ENCODE measurements at regions of chr22 and their contacts with region 1.

Region 1: GRCh38 chr22:20429254-20430100 is 8.1 kb downstream of the SCARF2 start:
- DNase-seq: peak in 5 of 10 donors; percentile 49 to 74 (median 56)
- H3K4me3 ChIP-seq: peak overlapping the region in 57 of 59 donors; percentile 8 to 64 (median 45)
- H3K27ac ChIP-seq: peak overlapping the region in 14 of 59 donors; percentile 9 to 59 (median 32)
- H3K27me3 ChIP-seq: peaks cover 0 to 10% (median 0%) of the 10 kb centered on the region in 45 donors
- CTCF ChIP-seq: no peak

Region 2: GRCh38 chr22:20298803-20299735 is 130.4 kb before region 1 on chr22:
- intact Hi-C with region 1: no loop called
- DNase-seq: peak in 8 of 10 donors; percentile 44 to 80 (median 68)
- H3K4me3 ChIP-seq: peak overlapping the region; percentile 29 to 75 (median 58)
- H3K27ac ChIP-seq: peak overlapping the region in 4 of 59 donors; percentile 21 to 65 (median 30)
- H3K27me3 ChIP-seq: peaks cover 0 to 22% (median 0%) of the 10 kb centered on the region in 45 donors
- CTCF ChIP-seq: no peak

Region 3: GRCh38 chr22:20490183-20490940 is 60.9 kb after region 1 on chr22:
- intact Hi-C with region 1: no loop called
- DNase-seq: no peak
- H3K4me3 ChIP-seq: no peak overlapping the region
- H3K27ac ChIP-seq: no peak overlapping the region
- H3K27me3 ChIP-seq: no peaks in the 10 kb centered on the region
- CTCF ChIP-seq: no peak

Region 4: GRCh38 chr22:20550821-20551744 is 121.6 kb after region 1 on chr22:
- intact Hi-C with region 1: loop called in 1 of 2 experiments (anchors 10 kb)
- DNase-seq: peak in 7 of 10 donors; percentile 35 to 83 (median 70)
- H3K4me3 ChIP-seq: peak overlapping the region in 44 of 59 donors; percentile 4 to 51 (median 24)
- H3K27ac ChIP-seq: peak overlapping the region; percentile 85 to 99 (median 97)
- H3K27me3 ChIP-seq: no peaks in the 10 kb centered on the region
- CTCF ChIP-seq: peak in 4 of 56 donors; percentile 5 to 23 (median 15)

Measured in dorsolateral prefrontal cortex (tissue), 120 donors.